ENCODE measurements at regions of chr13 and their contacts with region 1.

Region 1: DNA sequence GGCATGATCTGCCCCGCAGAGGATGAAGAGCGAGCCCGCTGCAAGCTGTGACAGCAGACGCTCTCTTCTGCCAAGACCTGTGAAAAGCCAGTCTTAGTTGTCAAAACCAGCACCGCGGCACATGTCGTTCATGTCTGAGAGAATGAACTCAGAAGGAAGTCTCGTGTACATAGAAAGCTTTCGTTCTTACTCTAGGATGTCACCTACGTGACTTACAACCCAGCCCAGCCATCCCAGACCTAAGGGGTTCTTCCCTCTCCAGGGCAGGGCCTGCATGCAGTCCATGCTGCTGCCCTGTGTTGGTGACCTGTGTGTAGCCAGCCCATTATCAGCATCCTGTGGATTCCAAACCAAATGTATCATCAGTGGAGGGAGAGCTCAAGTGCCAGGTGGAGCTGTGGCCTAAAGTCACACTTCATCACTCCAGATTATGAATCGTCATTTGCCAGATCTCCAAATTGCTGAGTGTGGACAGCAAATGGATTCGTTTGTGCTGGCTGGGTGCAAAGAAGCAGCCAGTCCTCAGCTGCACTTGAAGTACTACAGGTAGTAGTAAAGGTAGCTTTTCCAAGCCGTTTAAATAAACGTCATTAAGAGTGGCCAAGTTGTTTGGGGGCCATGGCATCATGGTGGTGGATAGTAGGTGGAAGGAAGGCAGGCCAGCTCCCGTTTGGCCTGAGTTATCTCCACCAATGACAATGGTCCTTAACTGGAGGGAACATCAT is 73.9 kb upstream of the GPR183 start:
- DNase-seq: peak; percentile 82
- ATAC-seq: peak; percentile 77
- H3K4me3 ChIP-seq: no peak overlapping the region
- H3K27ac ChIP-seq: peak overlapping the region; percentile 41
- H3K4me1 ChIP-seq: peaks cover 65% of the 10 kb centered on the region
- H3K27me3 ChIP-seq: no peaks in the 10 kb centered on the region
- CTCF ChIP-seq: no peak
- EP300 ChIP-seq: peak; percentile 58 to 59; a peak in 1 of 4 replicates
- POLR2A ChIP-seq: 0 out of 2 replicates have a peak, but pooled peaks have one; percentile 34
- RAD21 ChIP-seq: peak; percentile 31

Region 2: GRCh38 chr13:99281811-99282263 is 99.2 kb before region 1 on chr13:
- CTCF ChIA-PET with region 1: no interaction called
- POLR2A ChIA-PET with region 1: interaction called, 7 read pairs
- RAD21 ChIA-PET with region 1: interaction called, 7 read pairs
- SMC1A ChIA-PET with region 1: interaction called, 16 read pairs
- in situ Hi-C with region 1: no loop called
- intact Hi-C with region 1: no loop called
- DNase-seq: no peak
- ATAC-seq: peak; percentile 89
- H3K4me3 ChIP-seq: peak overlapping the region; percentile 8
- H3K27ac ChIP-seq: peak overlapping the region; percentile 79
- H3K4me1 ChIP-seq: peaks cover 53% of the 10 kb centered on the region
- H3K27me3 ChIP-seq: no peaks in the 10 kb centered on the region
- CTCF ChIP-seq: no peak
- EP300 ChIP-seq: no peak
- POLR2A ChIP-seq: no peak
- RAD21 ChIP-seq: no peak

Region 3: DNA sequence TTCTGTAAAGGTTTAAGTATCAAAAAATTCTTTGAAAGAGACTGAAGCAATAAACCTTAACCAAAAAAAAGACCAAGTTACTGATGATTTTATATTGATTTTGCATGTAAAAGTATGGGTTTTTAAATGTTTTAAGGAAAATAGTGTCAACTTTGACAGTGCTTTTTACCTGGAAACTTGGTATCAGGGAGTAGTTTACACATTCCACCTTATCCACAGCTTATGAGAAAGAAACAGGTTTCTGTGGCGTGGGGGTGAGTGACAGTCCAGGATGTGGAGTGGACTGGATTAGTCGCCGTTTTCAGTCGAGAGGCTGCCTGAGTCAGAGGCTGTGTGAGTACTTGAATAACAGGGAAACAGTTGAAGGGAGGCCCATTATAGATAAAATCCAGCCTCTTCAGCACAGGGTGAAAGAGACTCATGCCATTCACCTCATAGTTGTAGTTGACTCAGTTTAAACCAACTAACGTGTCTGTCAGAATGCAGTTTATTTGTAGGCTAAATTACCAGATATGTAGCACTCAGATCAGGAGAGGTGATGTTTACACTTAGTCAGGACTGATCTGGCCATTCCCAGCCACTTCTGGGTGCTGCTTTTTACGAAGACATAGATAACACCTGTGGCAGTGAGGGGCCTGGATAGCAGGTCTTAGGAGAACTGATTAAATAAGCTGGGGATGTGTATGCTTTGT is 73.3 kb before region 1 on chr13:
- CTCF ChIA-PET with region 1: interaction called, 9 read pairs
- POLR2A ChIA-PET with region 1: interaction called, 4 read pairs
- RAD21 ChIA-PET with region 1: interaction called, 16 read pairs
- SMC1A ChIA-PET with region 1: interaction called, 21 read pairs
- in situ Hi-C with region 1: no loop called
- intact Hi-C with region 1: no loop called
- DNase-seq: no peak
- ATAC-seq: peak; percentile 50
- H3K4me3 ChIP-seq: peak overlapping the region; percentile 98
- H3K27ac ChIP-seq: peak overlapping the region; percentile 93
- H3K4me1 ChIP-seq: peaks cover 49% of the 10 kb centered on the region
- H3K27me3 ChIP-seq: no peaks in the 10 kb centered on the region
- CTCF ChIP-seq: no peak
- EP300 ChIP-seq: no peak
- POLR2A ChIP-seq: no peak; the same call in 1 of the 2 replicates
- RAD21 ChIP-seq: no peak

Region 4: DNA sequence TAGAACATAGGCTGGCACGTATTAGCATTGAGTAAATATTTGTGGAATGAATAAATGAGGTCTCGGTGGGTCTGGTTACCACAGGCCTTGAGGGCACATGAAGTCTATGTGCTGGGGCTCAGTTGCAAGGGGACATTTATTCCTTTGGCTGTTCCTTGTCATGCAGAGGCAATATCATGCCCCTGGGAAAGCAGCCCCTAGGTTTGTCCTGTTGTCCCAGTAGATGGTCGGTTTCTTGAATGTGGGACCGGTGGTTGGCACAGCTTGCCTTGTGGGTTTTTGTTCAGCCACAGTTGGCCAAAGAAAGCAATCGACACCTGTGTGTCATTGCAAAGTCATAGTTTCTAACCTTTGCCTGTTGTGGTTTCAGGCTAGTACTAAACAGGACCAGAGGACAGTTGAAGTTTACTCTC is 49.2 kb before region 1 on chr13:
- CTCF ChIA-PET with region 1: interaction called, 3 read pairs
- POLR2A ChIA-PET with region 1: interaction called, 3 read pairs
- RAD21 ChIA-PET with region 1: interaction called, 6 read pairs
- SMC1A ChIA-PET with region 1: interaction called, 12 read pairs
- in situ Hi-C with region 1: no loop called
- intact Hi-C with region 1: no loop called
- DNase-seq: peak; percentile 79
- ATAC-seq: peak; percentile 89
- H3K4me3 ChIP-seq: no peak overlapping the region
- H3K27ac ChIP-seq: peak overlapping the region; percentile 66; the same call in 1 of the 2 replicates
- H3K4me1 ChIP-seq: peaks cover 21% of the 10 kb centered on the region
- H3K27me3 ChIP-seq: no peaks in the 10 kb centered on the region
- CTCF ChIP-seq: no peak
- EP300 ChIP-seq: peak; percentile 39 to 52; a peak in 2 of 4 replicates
- POLR2A ChIP-seq: no peak
- RAD21 ChIP-seq: no peak

Region 5: GRCh38 chr13:99417201-99418102 is 36.4 kb after region 1 on chr13:
- CTCF ChIA-PET with region 1: interaction called, 13 read pairs
- POLR2A ChIA-PET with region 1: interaction called, 4 read pairs
- RAD21 ChIA-PET with region 1: interaction called, 22 read pairs
- SMC1A ChIA-PET with region 1: interaction called, 51 read pairs
- in situ Hi-C with region 1: no loop called
- intact Hi-C with region 1: no loop called
- DNase-seq: no peak
- ATAC-seq: no peak
- H3K4me3 ChIP-seq: no peak overlapping the region
- H3K27ac ChIP-seq: no peak overlapping the region
- H3K4me1 ChIP-seq: peaks cover 40% of the 10 kb centered on the region
- H3K27me3 ChIP-seq: no peaks in the 10 kb centered on the region
- CTCF ChIP-seq: no peak
- EP300 ChIP-seq: no peak
- POLR2A ChIP-seq: no peak
- RAD21 ChIP-seq: no peak

Region 6: GRCh38 chr13:99450416-99450815 is 69.3 kb after region 1 on chr13:
- CTCF ChIA-PET with region 1: no interaction called
- POLR2A ChIA-PET with region 1: no interaction called
- RAD21 ChIA-PET with region 1: no interaction called
- SMC1A ChIA-PET with region 1: no interaction called
- in situ Hi-C with region 1: no loop called
- intact Hi-C with region 1: no loop called
- DNase-seq: no peak
- ATAC-seq: no peak
- H3K4me3 ChIP-seq: no peak overlapping the region
- H3K27ac ChIP-seq: no peak overlapping the region
- H3K4me1 ChIP-seq: no peaks in the 10 kb centered on the region; the same call in 1 of the 2 replicates
- H3K27me3 ChIP-seq: no peaks in the 10 kb centered on the region
- CTCF ChIP-seq: no peak
- EP300 ChIP-seq: no peak
- POLR2A ChIP-seq: no peak
- RAD21 ChIP-seq: no peak

Measured in GM12878 (cell line).